Adrenal gland (tissue), 19 donors: ENCODE measurements at regions of chr16 and their contacts with region 1.

Region 1: GRCh38 chr16:57084257-57084770 is 8.1 kb upstream of the CPNE2 start:
- DNase-seq: peak; percentile 59 to 87 (median 70)
- H3K4me3 ChIP-seq: no peak overlapping the region
- H3K27ac ChIP-seq: peak overlapping the region in 1 of 5 donors; percentile 18
- H3K4me1 ChIP-seq: peaks cover 0 to 8% of the 10 kb centered on the region in 2 donors
- H3K27me3 ChIP-seq: no peaks in the 10 kb centered on the region
- CTCF ChIP-seq: peak; percentile 90 to 98 (median 96)
- POLR2A ChIP-seq: no peak

Region 2: GRCh38 chr16:57172891-57173290 is 88.6 kb after region 1 on chr16:
- intact Hi-C with region 1: loop called (anchors 5 kb)
- DNase-seq: no peak
- H3K4me3 ChIP-seq: no peak overlapping the region
- H3K27ac ChIP-seq: no peak overlapping the region
- H3K4me1 ChIP-seq: peaks cover 0 to under 1% of the 10 kb centered on the region in 2 donors
- H3K27me3 ChIP-seq: no peaks in the 10 kb centered on the region
- CTCF ChIP-seq: no peak
- POLR2A ChIP-seq: no peak